ENCODE measurements at regions of chr15 and their contacts with region 1.

Region 1: GRCh38 chr15:92881802-92882696 is 18.1 kb upstream of the CHD2 start:
- DNase-seq: peak; percentile 99
- ATAC-seq: peak; percentile 93
- H3K4me3 ChIP-seq: peak overlapping the region; percentile 65
- H3K27ac ChIP-seq: peak overlapping the region; percentile 61
- H3K4me1 ChIP-seq: peaks cover 24% of the 10 kb centered on the region
- H3K27me3 ChIP-seq: no peaks in the 10 kb centered on the region
- CTCF ChIP-seq: no peak

Region 2: DNA sequence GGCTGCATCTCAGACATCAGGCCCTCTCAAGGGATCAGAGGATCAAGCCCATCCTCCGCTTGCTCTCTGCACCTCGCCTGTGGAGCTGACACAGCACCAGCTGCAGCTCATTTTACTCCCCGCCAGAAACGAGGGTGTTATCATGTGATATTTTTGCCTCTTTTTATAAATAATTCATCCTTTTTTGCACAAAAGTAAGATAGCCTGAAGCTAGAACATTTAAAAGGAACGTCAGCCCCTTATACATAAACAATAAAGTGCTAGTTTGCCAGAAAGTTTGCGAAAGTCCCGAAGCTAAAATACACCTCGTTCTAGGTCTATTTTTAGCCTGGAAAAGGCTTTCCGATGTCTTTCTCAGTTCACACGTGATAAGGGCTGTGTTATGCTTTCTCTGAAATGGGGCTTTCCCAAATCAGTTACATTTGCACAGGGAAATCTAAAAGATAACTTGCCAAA is 216.9 kb before region 1 on chr15:
- CTCF ChIA-PET with region 1: no interaction called
- POLR2A ChIA-PET with region 1: no interaction called
- intact Hi-C with region 1: no loop called
- DNase-seq: no peak
- ATAC-seq: no peak
- H3K4me3 ChIP-seq: no peak overlapping the region
- H3K27ac ChIP-seq: no peak overlapping the region
- H3K4me1 ChIP-seq: peaks cover 38% of the 10 kb centered on the region
- H3K27me3 ChIP-seq: no peaks in the 10 kb centered on the region
- CTCF ChIP-seq: no peak

Region 3: DNA sequence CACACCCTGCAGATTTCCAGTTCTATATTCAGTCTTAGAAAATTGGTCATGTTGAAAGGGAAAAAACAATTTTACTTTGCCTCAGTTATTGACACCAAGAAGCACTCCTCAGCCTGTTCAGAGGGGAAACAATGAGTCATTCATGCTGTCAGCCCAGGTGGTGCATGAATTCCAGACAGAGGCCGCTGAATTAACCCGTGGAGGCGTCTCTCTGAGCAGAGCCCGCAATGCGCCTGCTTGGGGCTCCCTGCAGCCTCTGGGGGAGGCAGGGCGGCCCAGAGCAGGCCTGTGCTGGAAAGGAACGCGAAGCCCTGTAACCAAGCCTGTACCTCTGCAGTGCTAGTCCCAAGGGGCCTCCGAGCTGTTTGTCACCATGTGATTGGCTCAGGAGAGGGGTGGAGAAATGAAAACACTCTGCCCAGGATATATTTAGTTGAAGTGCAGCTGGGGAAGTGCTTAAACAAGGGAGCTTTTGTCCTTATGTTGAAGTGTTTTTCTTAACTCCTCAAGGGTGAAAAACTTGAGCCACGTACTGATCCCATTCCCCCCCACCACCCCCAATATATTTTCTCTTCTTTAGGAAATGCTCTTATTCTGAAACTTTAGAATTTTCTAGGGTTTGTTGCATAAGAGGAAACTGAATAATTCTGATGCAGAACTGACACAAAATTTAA is 50.3 kb before region 1 on chr15:
- CTCF ChIA-PET with region 1: interaction called, 5 read pairs
- POLR2A ChIA-PET with region 1: interaction called, 9 read pairs
- intact Hi-C with region 1: loop called (anchors 5 kb)
- DNase-seq: peak; percentile 88
- ATAC-seq: peak; percentile 99
- H3K4me3 ChIP-seq: peak overlapping the region; percentile 43
- H3K27ac ChIP-seq: peak overlapping the region; percentile 84
- H3K4me1 ChIP-seq: peaks cover 25% of the 10 kb centered on the region
- H3K27me3 ChIP-seq: no peaks in the 10 kb centered on the region
- CTCF ChIP-seq: no peak

Region 4: GRCh38 chr15:92899948-92900708 is 18.1 kb after region 1 on chr15 and contains the start of gene CHD2:
- CTCF ChIA-PET with region 1: interaction called, 12 read pairs
- POLR2A ChIA-PET with region 1: interaction called, 18 read pairs
- intact Hi-C with region 1: loop called (anchors 2 kb)
- DNase-seq: peak; percentile 86
- ATAC-seq: peak; percentile 66
- H3K4me3 ChIP-seq: peak within 1 kb of the TSS; percentile 95
- H3K27ac ChIP-seq: peak within 1 kb of the TSS; percentile 91
- H3K4me1 ChIP-seq: peaks cover 17% of the 10 kb centered on the region
- H3K27me3 ChIP-seq: no peaks in the 10 kb centered on the region
- CTCF ChIP-seq: no peak
- total RNA-seq, gene CHD2: 42.7 and 50.6 TPM in 2 replicates

Region 5: DNA sequence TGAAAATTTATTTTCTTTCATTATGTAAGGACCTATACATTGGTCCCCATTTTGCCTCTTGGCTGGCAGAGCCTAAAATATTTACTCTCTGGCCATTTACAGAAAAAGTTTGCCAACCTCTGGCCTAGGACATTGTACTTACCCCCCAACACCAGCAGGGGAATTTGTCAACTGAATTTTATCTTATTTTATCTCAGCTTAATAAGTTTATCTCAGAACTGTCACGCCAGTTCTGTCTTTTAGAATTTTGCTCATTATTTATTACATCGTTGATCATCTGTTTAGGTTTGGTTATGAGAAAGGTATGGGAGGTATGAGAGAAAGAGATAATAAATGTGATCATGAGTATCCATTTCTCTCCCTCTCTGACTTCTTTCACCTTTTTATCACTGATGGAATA is 56.3 kb after region 1 on chr15:
- CTCF ChIA-PET with region 1: no interaction called
- POLR2A ChIA-PET with region 1: no interaction called
- intact Hi-C with region 1: no loop called
- DNase-seq: no peak
- ATAC-seq: no peak
- H3K4me3 ChIP-seq: no peak overlapping the region
- H3K27ac ChIP-seq: no peak overlapping the region
- H3K4me1 ChIP-seq: no peaks in the 10 kb centered on the region
- H3K27me3 ChIP-seq: no peaks in the 10 kb centered on the region
- CTCF ChIP-seq: peak; percentile 39; the same call in 1 of the 2 replicates

Measured in PC-3 (cell line).